CD8-positive, alpha-beta T cell (primary cell): ENCODE measurements at regions of chr1 and their contacts with region 1.

Region 1: GRCh38 chr1:202926720-202927491 is at the start of gene KLHL12:
- DNase-seq: peak; percentile 87 to 97 (median 95)
- ATAC-seq: peak; percentile 95
- H3K4me3 ChIP-seq: peak within 1 kb of the TSS; percentile 97 to 98
- H3K4me3 Mint-ChIP-seq: peak within 1 kb of the TSS; percentile 96
- H3K27ac ChIP-seq: peak within 1 kb of the TSS; percentile 95 to 97
- H3K27ac Mint-ChIP-seq: peak within 1 kb of the TSS; percentile 97
- H3K4me1 ChIP-seq: peaks cover 18% of the 10 kb centered on the region
- H3K4me1 Mint-ChIP-seq: peaks cover 31% of the 10 kb centered on the region
- H3K27me3 ChIP-seq: no peaks in the 10 kb centered on the region
- H3K27me3 Mint-ChIP-seq: no peaks in the 10 kb centered on the region
- CTCF ChIP-seq: peak; percentile 87
- total RNA-seq, gene KLHL12: 17.9 to 19.2 TPM

Region 2: GRCh38 chr1:202810615-202811295 is 116.2 kb before region 1 on chr1 and contains the start of gene PCAT6:
- CTCF ChIA-PET with region 1: no interaction called
- POLR2A ChIA-PET with region 1: no interaction called
- intact Hi-C with region 1: loop called in 1 of 2 experiments (anchors 1 kb)
- DNase-seq: peak; percentile 67 to 93 (median 84)
- ATAC-seq: peak; percentile 67
- H3K4me3 ChIP-seq: peak within 1 kb of the TSS; percentile 80 to 94
- H3K4me3 Mint-ChIP-seq: peak within 1 kb of the TSS; percentile 88
- H3K27ac ChIP-seq: peak within 1 kb of the TSS; percentile 51 to 72
- H3K27ac Mint-ChIP-seq: peak within 1 kb of the TSS; percentile 90
- H3K4me1 ChIP-seq: peaks cover 20% of the 10 kb centered on the region
- H3K4me1 Mint-ChIP-seq: peaks cover 34% of the 10 kb centered on the region
- H3K27me3 ChIP-seq: no peaks in the 10 kb centered on the region
- H3K27me3 Mint-ChIP-seq: no peaks in the 10 kb centered on the region
- CTCF ChIP-seq: no peak
- total RNA-seq, gene PCAT6: 0.92 to 1.6 TPM

Region 3: DNA sequence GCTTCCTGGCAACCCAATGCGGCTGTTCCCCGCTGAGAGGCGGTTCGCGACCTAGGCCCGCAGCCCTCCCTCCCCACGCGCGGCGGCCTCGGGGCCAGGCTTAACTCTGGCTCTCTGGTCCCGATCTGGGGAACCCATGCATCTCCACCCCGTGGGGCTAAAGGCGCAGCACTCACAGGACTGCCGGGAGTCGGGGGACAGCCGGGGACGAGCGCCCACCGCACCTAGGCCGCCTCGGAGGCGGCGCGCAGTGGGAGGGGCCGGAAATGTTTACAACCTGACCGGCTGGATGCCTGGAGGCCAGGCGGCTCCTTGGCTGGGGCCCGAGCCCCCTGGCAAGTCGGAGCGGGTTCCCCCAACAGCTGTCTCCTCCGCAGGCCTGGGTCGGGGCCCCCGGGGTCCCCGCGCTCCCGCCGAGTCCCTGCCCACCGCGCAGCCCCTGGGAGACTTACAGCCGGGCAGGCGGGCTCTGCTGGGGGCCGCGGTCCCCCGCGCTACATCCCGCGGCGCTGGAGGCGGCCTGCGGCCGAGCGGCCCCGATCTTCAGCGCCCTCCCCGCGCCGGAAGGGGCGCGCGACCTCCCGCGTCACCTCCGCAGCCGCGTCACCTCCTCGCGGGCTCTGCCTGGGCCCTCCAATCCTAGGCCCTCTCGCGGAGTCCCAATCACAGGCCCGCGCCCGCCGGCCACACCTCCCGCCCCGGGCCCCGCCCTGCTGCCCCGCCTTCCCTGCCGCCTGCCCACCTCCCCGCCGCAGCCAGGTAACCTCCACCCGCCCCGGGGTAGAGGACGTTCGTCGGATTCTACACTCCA is 31.0 kb after region 1 on chr1 and contains the start of gene ADIPOR1:
- CTCF ChIA-PET with region 1: no interaction called
- POLR2A ChIA-PET with region 1: interaction called, 5 read pairs
- intact Hi-C with region 1: loop called (anchors 1 kb)
- DNase-seq: peak; percentile 89 to 96 (median 94)
- ATAC-seq: peak; percentile 97
- H3K4me3 ChIP-seq: peak within 1 kb of the TSS; percentile 89 to 93
- H3K4me3 Mint-ChIP-seq: peak within 1 kb of the TSS; percentile 81
- H3K27ac ChIP-seq: peak within 1 kb of the TSS; percentile 89 to 94
- H3K27ac Mint-ChIP-seq: peak within 1 kb of the TSS; percentile 92
- H3K4me1 ChIP-seq: peaks cover 36% of the 10 kb centered on the region
- H3K4me1 Mint-ChIP-seq: peaks cover 46% of the 10 kb centered on the region
- H3K27me3 ChIP-seq: no peaks in the 10 kb centered on the region
- H3K27me3 Mint-ChIP-seq: no peaks in the 10 kb centered on the region
- CTCF ChIP-seq: no peak
- total RNA-seq, gene ADIPOR1: 106 to 117 TPM

Region 4: GRCh38 chr1:202968840-202969295 is 42.0 kb after region 1 on chr1:
- CTCF ChIA-PET with region 1: interaction called, 3 read pairs
- POLR2A ChIA-PET with region 1: interaction called, 4 read pairs
- intact Hi-C with region 1: loop called (anchors 1 kb)
- DNase-seq: peak in 4 of 9 experiments; percentile 14 to 64 (median 40)
- ATAC-seq: peak; percentile 19
- H3K4me3 ChIP-seq: no peak overlapping the region
- H3K4me3 Mint-ChIP-seq: peak overlapping the region; percentile 49
- H3K27ac ChIP-seq: no peak overlapping the region
- H3K27ac Mint-ChIP-seq: no peak overlapping the region
- H3K4me1 ChIP-seq: peaks cover 24% of the 10 kb centered on the region
- H3K4me1 Mint-ChIP-seq: peaks cover 32% of the 10 kb centered on the region
- H3K27me3 ChIP-seq: no peaks in the 10 kb centered on the region
- H3K27me3 Mint-ChIP-seq: no peaks in the 10 kb centered on the region
- CTCF ChIP-seq: peak; percentile 28

Region 5: GRCh38 chr1:203069030-203069747 is 142.3 kb after region 1 on chr1:
- CTCF ChIA-PET with region 1: no interaction called
- POLR2A ChIA-PET with region 1: no interaction called
- intact Hi-C with region 1: no loop called
- DNase-seq: no peak
- ATAC-seq: no peak
- H3K4me3 ChIP-seq: no peak overlapping the region
- H3K4me3 Mint-ChIP-seq: no peak overlapping the region
- H3K27ac ChIP-seq: no peak overlapping the region
- H3K27ac Mint-ChIP-seq: no peak overlapping the region
- H3K4me1 ChIP-seq: no peaks in the 10 kb centered on the region
- H3K4me1 Mint-ChIP-seq: no peaks in the 10 kb centered on the region
- H3K27me3 ChIP-seq: peaks cover 0 to 4% of the 10 kb centered on the region in 2 experiments
- H3K27me3 Mint-ChIP-seq: peaks cover 14% of the 10 kb centered on the region
- CTCF ChIP-seq: no peak